Naive thymus-derived CD4-positive, alpha-beta T cell (primary cell): ENCODE measurements at regions of chr12 and their contacts with region 1.

Region 1: GRCh38 chr12:58346032-58346632 is 404.8 kb downstream of the ATP23 start:
- DNase-seq: peak in 5 of 9 donors; percentile 8 to 27 (median 16)
- ATAC-seq: no peak
- H3K4me3 ChIP-seq: no peak overlapping the region
- H3K4me3 Mint-ChIP-seq: no peak overlapping the region
- H3K27ac ChIP-seq: no peak overlapping the region
- H3K27ac Mint-ChIP-seq: no peak overlapping the region
- H3K4me1 ChIP-seq: no peaks in the 10 kb centered on the region
- H3K4me1 Mint-ChIP-seq: no peaks in the 10 kb centered on the region
- H3K27me3 ChIP-seq: no peaks in the 10 kb centered on the region
- H3K27me3 Mint-ChIP-seq: peaks cover 16 to 30% (median 21%) of the 10 kb centered on the region in 5 donors

Region 2: DNA sequence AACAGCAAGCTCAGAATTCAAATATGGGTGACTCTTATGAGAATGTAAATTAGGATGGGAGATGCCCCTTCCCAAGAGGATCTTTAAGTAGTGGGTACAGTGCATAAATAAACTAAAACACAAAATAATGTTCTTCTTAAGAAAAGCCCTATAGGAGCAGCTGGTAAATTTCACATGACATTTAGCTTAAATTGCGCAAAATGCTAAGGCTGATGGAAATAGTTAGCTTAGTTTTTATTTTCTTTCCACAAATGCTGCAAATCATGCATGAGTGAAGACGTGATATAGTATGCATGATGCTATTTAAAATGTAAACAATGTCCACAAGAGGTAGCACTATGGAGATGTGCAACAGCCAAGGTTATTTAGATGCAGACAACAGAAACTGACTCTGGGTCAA is 76.7 kb before region 1 on chr12:
- CTCF ChIA-PET with region 1: no interaction called
- POLR2A ChIA-PET with region 1: no interaction called
- intact Hi-C with region 1: no loop called
- DNase-seq: no peak
- ATAC-seq: no peak
- H3K4me3 ChIP-seq: no peak overlapping the region
- H3K4me3 Mint-ChIP-seq: no peak overlapping the region
- H3K27ac ChIP-seq: no peak overlapping the region
- H3K27ac Mint-ChIP-seq: no peak overlapping the region
- H3K4me1 ChIP-seq: no peaks in the 10 kb centered on the region
- H3K4me1 Mint-ChIP-seq: no peaks in the 10 kb centered on the region
- H3K27me3 ChIP-seq: no peaks in the 10 kb centered on the region
- H3K27me3 Mint-ChIP-seq: peaks cover 0 to 21% (median 5%) of the 10 kb centered on the region in 5 donors

Region 3: DNA sequence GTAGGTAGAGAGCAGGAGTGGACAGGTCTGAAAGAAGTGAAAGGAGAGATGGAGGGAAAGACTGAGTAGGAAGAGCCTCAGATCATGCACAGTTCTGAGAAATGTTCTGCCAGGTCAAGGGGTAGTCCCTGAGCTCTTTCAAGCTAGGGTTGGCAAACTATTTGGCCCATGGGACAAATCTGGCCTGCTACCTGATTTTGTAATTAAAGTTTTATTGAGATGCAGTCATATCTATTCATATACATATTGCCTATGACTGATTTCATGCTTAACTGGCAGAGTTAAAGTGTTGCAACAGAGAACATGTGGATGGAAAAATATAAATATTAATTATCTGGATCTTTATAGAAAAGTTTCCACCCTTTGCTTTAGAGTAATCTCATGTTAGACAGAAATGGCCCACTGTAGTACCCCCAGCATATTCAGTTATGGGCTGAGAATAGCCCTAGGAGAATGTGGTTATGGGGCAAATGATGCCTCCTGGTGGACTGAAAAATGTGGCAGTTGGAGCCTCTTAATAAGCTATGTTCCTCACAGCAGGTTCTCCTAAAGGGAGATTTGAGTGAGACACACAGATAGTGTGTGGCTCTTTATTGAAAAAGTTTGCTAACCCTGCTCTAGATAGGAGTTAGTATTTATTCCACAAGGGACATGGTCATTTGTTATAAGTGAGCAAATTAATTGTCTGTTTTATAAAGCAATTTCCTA is 97.3 kb after region 1 on chr12:
- CTCF ChIA-PET with region 1: no interaction called
- POLR2A ChIA-PET with region 1: no interaction called
- intact Hi-C with region 1: loop called in 1 of 2 experiments (anchors 1 kb)
- DNase-seq: no peak
- ATAC-seq: no peak
- H3K4me3 ChIP-seq: no peak overlapping the region
- H3K4me3 Mint-ChIP-seq: no peak overlapping the region
- H3K27ac ChIP-seq: no peak overlapping the region
- H3K27ac Mint-ChIP-seq: no peak overlapping the region
- H3K4me1 ChIP-seq: no peaks in the 10 kb centered on the region
- H3K4me1 Mint-ChIP-seq: no peaks in the 10 kb centered on the region
- H3K27me3 ChIP-seq: no peaks in the 10 kb centered on the region
- H3K27me3 Mint-ChIP-seq: peaks cover 0 to 21% (median 5%) of the 10 kb centered on the region in 5 donors

Region 4: DNA sequence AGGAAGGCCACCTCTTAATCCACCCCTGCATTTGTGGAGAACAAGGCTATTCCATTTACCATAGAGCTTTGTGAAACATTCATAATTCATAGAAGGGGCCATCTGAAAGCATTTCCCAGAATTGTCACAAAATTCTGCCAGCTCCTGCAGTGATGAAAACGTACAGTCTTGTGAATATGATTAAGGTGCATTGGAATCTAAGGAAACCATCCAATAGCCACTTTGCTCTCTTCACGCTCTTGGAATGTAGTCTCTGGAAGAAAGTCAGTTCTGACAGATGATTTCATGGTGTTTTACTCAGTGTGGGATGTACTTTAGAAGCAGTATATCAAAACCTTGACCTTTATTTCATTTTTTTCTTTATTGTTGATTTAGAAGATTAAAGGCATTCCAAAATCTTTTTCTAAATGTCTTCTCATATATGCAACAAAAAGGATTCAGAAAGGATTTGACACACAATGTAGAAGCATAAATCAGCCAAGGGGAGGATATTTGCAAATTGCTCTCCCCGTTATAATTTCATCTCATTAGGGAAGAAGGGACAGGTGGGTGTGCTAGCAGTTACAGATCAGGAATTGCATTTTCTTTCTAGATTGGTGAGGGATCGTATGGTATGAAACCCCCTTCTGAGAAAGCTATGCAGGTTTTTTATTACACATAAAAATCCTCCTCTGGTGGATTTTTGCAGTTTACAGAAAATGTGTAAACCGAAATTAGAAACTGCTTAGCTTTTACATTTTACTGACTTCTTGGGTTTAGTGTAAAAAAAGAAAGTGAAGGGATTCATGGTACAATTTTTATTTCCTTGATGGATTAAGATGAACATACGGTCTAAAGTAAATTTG is 184.0 kb after region 1 on chr12:
- CTCF ChIA-PET with region 1: no interaction called
- POLR2A ChIA-PET with region 1: no interaction called
- intact Hi-C with region 1: loop called in 1 of 2 experiments (anchors 10 kb)
- DNase-seq: no peak
- ATAC-seq: no peak
- H3K4me3 ChIP-seq: no peak overlapping the region
- H3K4me3 Mint-ChIP-seq: no peak overlapping the region
- H3K27ac ChIP-seq: no peak overlapping the region
- H3K27ac Mint-ChIP-seq: no peak overlapping the region
- H3K4me1 ChIP-seq: no peaks in the 10 kb centered on the region
- H3K4me1 Mint-ChIP-seq: no peaks in the 10 kb centered on the region
- H3K27me3 ChIP-seq: no peaks in the 10 kb centered on the region
- H3K27me3 Mint-ChIP-seq: peaks cover 0 to 12% (median 6%) of the 10 kb centered on the region in 5 donors

Region 5: DNA sequence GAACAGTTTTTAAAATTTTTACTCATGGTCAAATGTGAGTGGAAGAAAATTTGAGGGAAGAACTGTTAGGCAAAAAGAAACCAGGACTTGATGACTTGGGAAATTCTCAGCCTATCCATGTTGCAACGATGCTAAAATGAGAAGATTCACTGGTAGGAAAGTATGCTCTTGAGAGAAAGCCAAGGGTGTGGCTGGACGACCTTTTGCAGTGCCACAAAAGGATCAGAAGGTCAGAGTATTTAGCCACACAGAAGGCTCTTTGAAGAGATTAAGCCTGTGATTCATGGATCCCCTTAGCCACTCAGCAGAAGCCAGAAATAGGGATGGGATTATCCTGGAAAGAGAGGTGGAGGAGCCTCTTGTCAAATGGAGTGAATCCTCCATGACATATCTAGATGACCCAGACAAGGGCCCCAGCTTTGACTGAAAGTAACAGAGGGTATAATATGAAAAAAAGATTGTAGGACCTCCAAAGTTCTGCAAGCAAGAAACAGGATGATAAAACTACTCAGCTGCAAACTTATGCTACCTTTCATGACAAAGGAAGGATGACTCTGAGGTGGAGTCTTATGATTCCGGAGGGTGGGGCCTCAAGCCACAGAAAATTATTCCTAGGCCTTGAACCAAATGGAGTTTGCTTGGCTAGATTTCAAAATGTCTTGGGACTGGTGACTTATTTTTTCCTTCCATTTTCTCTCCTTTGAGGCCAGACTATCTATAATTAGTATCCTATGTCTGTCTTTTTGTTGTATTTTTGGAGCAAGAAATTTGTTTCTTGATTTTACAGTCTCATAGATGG is 237.6 kb after region 1 on chr12:
- CTCF ChIA-PET with region 1: no interaction called
- POLR2A ChIA-PET with region 1: no interaction called
- intact Hi-C with region 1: no loop called
- DNase-seq: no peak
- ATAC-seq: no peak
- H3K4me3 ChIP-seq: no peak overlapping the region
- H3K4me3 Mint-ChIP-seq: no peak overlapping the region
- H3K27ac ChIP-seq: no peak overlapping the region
- H3K27ac Mint-ChIP-seq: no peak overlapping the region
- H3K4me1 ChIP-seq: no peaks in the 10 kb centered on the region
- H3K4me1 Mint-ChIP-seq: no peaks in the 10 kb centered on the region
- H3K27me3 ChIP-seq: no peaks in the 10 kb centered on the region
- H3K27me3 Mint-ChIP-seq: no peaks in the 10 kb centered on the region

Region 6: GRCh38 chr12:58720421-58720820 is 374.3 kb after region 1 on chr12:
- CTCF ChIA-PET with region 1: no interaction called
- POLR2A ChIA-PET with region 1: no interaction called
- intact Hi-C with region 1: no loop called
- DNase-seq: no peak
- ATAC-seq: no peak
- H3K4me3 ChIP-seq: no peak overlapping the region
- H3K4me3 Mint-ChIP-seq: no peak overlapping the region
- H3K27ac ChIP-seq: no peak overlapping the region
- H3K27ac Mint-ChIP-seq: no peak overlapping the region
- H3K4me1 ChIP-seq: no peaks in the 10 kb centered on the region
- H3K4me1 Mint-ChIP-seq: no peaks in the 10 kb centered on the region
- H3K27me3 ChIP-seq: no peaks in the 10 kb centered on the region
- H3K27me3 Mint-ChIP-seq: no peaks in the 10 kb centered on the region

Region 7: GRCh38 chr12:58757422-58757821 is 411.3 kb after region 1 on chr12:
- CTCF ChIA-PET with region 1: no interaction called
- POLR2A ChIA-PET with region 1: no interaction called
- intact Hi-C with region 1: no loop called
- DNase-seq: no peak
- ATAC-seq: no peak
- H3K4me3 ChIP-seq: no peak overlapping the region
- H3K4me3 Mint-ChIP-seq: no peak overlapping the region
- H3K27ac ChIP-seq: no peak overlapping the region
- H3K27ac Mint-ChIP-seq: no peak overlapping the region
- H3K4me1 ChIP-seq: no peaks in the 10 kb centered on the region
- H3K4me1 Mint-ChIP-seq: no peaks in the 10 kb centered on the region
- H3K27me3 ChIP-seq: no peaks in the 10 kb centered on the region
- H3K27me3 Mint-ChIP-seq: no peaks in the 10 kb centered on the region

Region 8: GRCh38 chr12:59113831-59114615 is 767.9 kb after region 1 on chr12:
- CTCF ChIA-PET with region 1: no interaction called
- POLR2A ChIA-PET with region 1: no interaction called
- intact Hi-C with region 1: loop called in 1 of 2 experiments (anchors 2 kb)
- DNase-seq: peak in 4 of 9 donors; percentile 1 to 54 (median 8)
- ATAC-seq: no peak
- H3K4me3 ChIP-seq: no peak overlapping the region
- H3K4me3 Mint-ChIP-seq: no peak overlapping the region
- H3K27ac ChIP-seq: no peak overlapping the region
- H3K27ac Mint-ChIP-seq: no peak overlapping the region
- H3K4me1 ChIP-seq: no peaks in the 10 kb centered on the region
- H3K4me1 Mint-ChIP-seq: peaks cover 0 to 2% (median 0%) of the 10 kb centered on the region in 7 donors
- H3K27me3 ChIP-seq: no peaks in the 10 kb centered on the region
- H3K27me3 Mint-ChIP-seq: no peaks in the 10 kb centered on the region

Region 9: DNA sequence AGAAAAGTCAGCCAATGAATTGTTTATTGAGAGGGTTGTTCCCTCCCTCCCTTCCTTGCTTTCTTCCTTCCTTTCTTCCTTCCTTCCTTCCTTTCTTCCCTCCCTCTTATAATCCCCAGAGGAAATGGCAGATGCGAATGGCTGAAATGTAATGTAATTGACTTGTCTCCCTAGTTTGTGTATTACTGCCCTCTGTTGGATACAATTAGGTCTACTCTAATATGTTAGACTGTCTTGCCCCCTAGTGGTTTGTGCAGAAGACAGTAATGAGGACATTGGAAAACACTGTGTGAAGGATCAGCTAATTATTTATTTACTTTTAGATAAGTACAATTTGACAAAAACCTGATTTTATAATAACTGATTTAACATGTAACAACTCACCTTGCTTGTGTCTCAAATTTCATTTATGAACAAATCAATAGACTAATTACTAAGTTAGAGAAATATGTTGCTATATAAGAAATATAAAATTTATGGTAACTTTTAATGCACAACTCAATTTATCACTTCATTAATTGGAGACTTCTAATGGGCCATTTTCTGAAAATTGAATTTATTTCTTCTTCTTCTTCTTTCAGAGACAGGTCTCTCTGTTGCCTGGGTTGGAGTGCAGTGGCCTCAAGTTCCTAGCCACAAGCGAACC is 804.0 kb after region 1 on chr12:
- CTCF ChIA-PET with region 1: no interaction called
- POLR2A ChIA-PET with region 1: no interaction called
- intact Hi-C with region 1: loop called (anchors 1 to 5 kb)
- DNase-seq: peak in 2 of 9 donors; percentile 3 to 20
- ATAC-seq: peak; percentile 74
- H3K4me3 ChIP-seq: no peak overlapping the region
- H3K4me3 Mint-ChIP-seq: no peak overlapping the region
- H3K27ac ChIP-seq: no peak overlapping the region
- H3K27ac Mint-ChIP-seq: no peak overlapping the region
- H3K4me1 ChIP-seq: no peaks in the 10 kb centered on the region
- H3K4me1 Mint-ChIP-seq: peaks cover 0 to 4% (median 0%) of the 10 kb centered on the region in 7 donors
- H3K27me3 ChIP-seq: no peaks in the 10 kb centered on the region
- H3K27me3 Mint-ChIP-seq: no peaks in the 10 kb centered on the region